ENCODE measurements at regions of chr20 and their contacts with region 1.

Region 1: DNA sequence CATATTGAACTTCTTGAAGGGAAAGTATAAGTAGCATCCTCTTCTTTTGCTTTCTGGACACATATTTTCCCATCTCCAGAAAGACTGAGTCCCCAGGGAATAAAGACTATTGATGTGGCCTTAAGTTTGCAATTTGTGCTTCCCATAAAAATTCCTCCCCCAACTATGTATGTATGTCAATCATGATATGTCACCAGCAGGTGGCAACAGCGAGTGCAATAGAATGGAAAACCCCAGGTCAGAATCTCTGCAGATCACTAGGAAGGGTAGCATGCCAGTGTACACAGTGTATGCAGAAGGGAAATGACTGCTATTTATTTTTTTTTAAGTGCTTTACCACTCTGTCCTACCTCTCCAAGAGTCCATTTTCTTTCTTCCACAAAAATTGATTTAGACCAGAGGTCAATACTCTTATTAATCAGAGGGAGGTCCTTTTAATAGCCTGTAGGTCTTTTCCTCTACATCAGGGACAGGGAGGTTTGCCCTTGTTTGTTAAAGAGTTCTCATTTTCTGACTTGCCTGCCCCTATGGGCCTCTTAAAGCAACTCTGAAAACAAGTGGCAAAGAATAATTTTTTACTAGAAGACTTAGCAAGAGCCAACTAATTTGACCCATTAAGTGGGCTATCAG is 61.4 kb downstream of the BMP2 start:
- DNase-seq: peak; percentile 35
- CTCF ChIP-seq: peak; percentile 65

Region 2: DNA sequence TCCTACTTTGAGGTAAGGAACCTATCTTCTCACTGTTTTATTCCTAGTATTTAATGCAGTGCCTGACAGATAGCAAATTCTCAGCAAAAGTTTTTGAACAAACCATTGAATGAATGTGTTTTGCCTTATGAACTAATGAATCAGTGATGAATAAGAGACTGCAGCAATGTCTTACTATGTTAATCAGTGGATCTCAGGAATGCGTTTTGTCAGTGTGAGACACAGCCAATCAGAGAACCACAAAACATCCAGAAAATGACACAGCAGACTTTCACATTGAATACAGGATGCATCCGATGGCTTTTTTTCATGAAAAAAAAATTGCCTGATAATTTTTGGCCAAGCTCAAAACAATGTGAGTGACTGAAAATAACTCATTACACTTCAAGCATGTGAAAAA is 209.1 kb after region 1 on chr20:
- in situ Hi-C with region 1: no loop called
- DNase-seq: no peak
- CTCF ChIP-seq: no peak

Region 3: DNA sequence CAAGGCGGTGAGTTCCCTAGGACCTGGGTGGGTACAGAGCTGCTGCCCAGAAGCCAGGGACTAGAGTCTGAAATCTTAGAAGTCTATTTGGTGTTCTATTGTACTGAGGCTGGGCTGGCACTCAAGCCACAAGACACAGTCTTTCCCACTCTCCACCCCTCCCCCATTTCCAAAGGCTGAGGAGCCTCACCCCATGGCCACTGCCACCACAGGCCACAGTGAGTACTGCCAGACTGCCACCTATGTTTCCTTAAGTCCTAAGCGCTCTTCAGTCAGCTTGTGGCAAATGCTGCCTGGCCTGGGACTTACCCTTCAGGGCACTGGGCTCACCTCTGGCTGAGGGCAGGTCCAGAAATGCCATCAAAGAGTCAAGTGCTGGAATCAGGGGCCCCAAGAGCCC is 642.0 kb after region 1 on chr20:
- in situ Hi-C with region 1: no loop called
- DNase-seq: no peak
- CTCF ChIP-seq: no peak

Region 4: GRCh38 chr20:7859356-7859802 is 1030.5 kb after region 1 on chr20:
- in situ Hi-C with region 1: loop called (anchors 25 kb)
- DNase-seq: no peak
- CTCF ChIP-seq: peak; percentile 56

Measured in GM13976 (cell line).